Motor neuron (in vitro differentiated cells): ENCODE measurements at regions of chr10 and their contacts with region 1.

Region 1: DNA sequence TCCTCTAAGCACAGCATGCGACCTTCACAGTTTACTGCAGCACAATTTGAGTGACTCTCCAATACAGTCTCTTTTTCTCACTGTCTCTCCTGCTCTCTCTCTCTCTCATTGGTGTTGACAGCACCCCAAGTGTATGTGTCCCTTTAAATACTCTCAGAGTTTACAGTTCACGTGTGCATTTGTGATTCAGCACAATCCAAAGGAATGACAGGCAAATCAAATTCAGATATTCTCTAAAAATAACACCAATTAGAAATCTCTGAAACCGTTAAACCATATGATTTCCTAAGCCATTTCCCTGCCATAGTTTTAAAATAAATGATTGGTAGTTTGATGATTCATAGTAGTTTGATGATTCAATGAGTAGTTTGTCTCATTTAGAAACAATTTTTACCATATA is 104.0 kb upstream of the GAD2 start:
- ATAC-seq: no peak
- H3K4me3 ChIP-seq: no peak overlapping the region
- H3K27ac ChIP-seq: no peak overlapping the region
- H3K4me1 ChIP-seq: no peaks in the 10 kb centered on the region

Region 2: DNA sequence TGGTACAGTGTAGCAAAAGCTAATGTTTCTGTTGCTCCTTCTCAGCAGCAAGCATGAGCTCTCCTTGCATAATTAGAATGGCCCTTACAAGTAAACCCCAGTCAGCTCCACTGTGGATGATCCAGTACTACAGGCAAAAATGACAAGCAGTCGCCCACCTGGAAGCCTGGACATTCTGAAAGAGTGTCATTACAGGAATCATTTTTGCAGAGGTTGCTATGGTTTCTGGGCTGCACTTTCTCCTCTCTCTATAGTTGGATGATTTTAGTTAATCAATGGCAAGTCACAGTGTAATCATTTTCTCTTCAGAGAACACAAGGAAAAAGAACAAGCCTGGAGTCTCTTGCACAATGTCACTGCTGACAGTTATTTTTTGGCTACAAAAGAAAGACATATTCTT is 281.5 kb before region 1 on chr10:
- in situ Hi-C with region 1: no loop called
- ATAC-seq: peak in 5 of 8 experiments; percentile 48 to 61 (median 50)
- H3K4me3 ChIP-seq: no peak overlapping the region
- H3K27ac ChIP-seq: no peak overlapping the region
- H3K4me1 ChIP-seq: peaks cover 10 to 11% of the 10 kb centered on the region in 2 donors

Region 3: DNA sequence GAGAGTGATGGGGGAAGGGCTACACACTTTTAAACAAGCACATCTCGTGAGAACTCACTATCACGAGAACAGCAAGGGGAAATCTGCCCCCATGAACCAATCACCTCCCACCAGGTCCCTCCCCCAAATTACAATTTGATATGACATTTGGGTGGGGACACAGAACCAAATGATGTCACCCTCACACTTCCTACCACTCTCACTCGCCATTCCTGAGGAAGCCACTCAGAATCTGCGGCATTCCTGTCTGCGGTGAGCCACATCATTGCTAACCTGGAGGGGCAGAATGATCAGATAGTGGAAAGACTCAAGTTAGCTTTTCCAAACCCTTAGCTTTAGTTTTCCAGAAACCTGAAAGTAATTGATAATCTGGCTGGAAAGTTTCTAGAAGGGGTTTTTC is 111.6 kb before region 1 on chr10:
- in situ Hi-C with region 1: loop called in 1 of 9 experiments (anchors 25 kb)
- ATAC-seq: no peak
- H3K4me3 ChIP-seq: no peak overlapping the region
- H3K27ac ChIP-seq: no peak overlapping the region
- H3K4me1 ChIP-seq: no peaks in the 10 kb centered on the region